Transverse colon (tissue), 4 donors: ENCODE measurements at regions of chr19 and their contacts with region 1.

Region 1: GRCh38 chr19:11203194-11204075 is 6.1 kb upstream of the KANK2 start:
- DNase-seq: peak; percentile 67
- H3K4me3 ChIP-seq: no peak overlapping the region
- H3K27ac ChIP-seq: peak overlapping the region; percentile 77 to 91 (median 84)
- H3K4me1 ChIP-seq: peaks cover 0 to 29% (median 12%) of the 10 kb centered on the region in 4 donors
- H3K27me3 ChIP-seq: no peaks in the 10 kb centered on the region
- CTCF ChIP-seq: peak; percentile 78 to 87 (median 81)
- EP300 ChIP-seq: peak; percentile 66
- POLR2A ChIP-seq: no peak

Region 2: GRCh38 chr19:10891405-10892086 is 311.9 kb before region 1 on chr19:
- in situ Hi-C with region 1: no loop called
- intact Hi-C with region 1: no loop called
- DNase-seq: peak; percentile 84
- H3K4me3 ChIP-seq: no peak overlapping the region
- H3K27ac ChIP-seq: peak overlapping the region; percentile 80 to 88 (median 83)
- H3K4me1 ChIP-seq: peaks cover 33 to 53% (median 46%) of the 10 kb centered on the region in 4 donors
- H3K27me3 ChIP-seq: no peaks in the 10 kb centered on the region
- CTCF ChIP-seq: no peak
- EP300 ChIP-seq: no peak
- POLR2A ChIP-seq: peak; percentile 79

Region 3: GRCh38 chr19:11041966-11042627 is 161.3 kb before region 1 on chr19:
- in situ Hi-C with region 1: loop called in 3 of 4 experiments (anchors 10 to 25 kb)
- intact Hi-C with region 1: no loop called
- DNase-seq: no peak
- H3K4me3 ChIP-seq: no peak overlapping the region
- H3K27ac ChIP-seq: no peak overlapping the region
- H3K4me1 ChIP-seq: no peaks in the 10 kb centered on the region
- H3K27me3 ChIP-seq: no peaks in the 10 kb centered on the region
- CTCF ChIP-seq: no peak
- EP300 ChIP-seq: no peak
- POLR2A ChIP-seq: no peak

Region 4: DNA sequence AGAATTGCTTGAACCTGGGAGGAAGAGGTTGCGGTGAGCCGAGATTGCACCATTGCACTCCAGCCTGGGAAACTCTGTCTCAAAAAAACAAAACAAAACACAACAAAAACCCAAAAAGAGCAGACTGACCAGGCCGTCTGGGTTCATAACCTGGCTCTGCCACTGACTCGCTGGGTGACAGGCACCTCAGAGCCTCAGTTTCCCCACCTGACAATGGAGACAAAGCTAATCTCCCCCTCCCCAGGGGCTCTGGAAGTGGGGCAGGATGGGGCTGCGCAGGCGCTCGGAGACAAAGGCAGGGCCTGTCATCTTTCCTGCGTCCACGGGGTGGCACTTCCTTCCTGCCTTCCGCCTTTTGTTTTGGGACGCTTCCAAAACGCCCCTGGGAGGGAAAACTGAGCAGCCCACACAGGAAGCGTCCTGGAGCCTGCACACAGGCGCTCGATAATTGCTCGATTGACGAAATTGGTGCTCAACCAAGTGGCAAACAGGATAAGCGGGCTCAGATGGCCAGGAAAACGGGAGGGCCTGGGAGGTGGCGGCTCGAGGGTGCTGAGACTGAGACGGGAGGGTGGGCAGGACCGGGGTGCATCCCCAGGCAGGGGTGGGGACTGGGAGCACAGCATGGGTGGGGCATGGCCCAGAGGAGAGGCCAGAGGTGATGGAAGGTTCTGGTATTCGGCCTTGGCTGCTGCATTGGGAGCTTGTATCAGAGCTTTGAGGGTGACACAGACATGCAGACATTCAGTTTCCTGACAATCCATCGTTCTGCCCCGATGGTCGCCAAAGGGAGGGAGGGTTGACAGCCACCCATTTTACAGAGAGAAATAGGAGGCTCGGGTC is 65.7 kb before region 1 on chr19:
- in situ Hi-C with region 1: loop called in 3 of 4 experiments (anchors 5 to 10 kb)
- intact Hi-C with region 1: loop called (anchors 2 kb)
- DNase-seq: peak; percentile 78
- H3K4me3 ChIP-seq: peak overlapping the region; percentile 3 to 38 (median 18)
- H3K27ac ChIP-seq: peak overlapping the region; percentile 84 to 96 (median 90)
- H3K4me1 ChIP-seq: peaks cover 33 to 48% (median 43%) of the 10 kb centered on the region in 4 donors
- H3K27me3 ChIP-seq: no peaks in the 10 kb centered on the region
- CTCF ChIP-seq: peak; percentile 79 to 95 (median 81)
- EP300 ChIP-seq: no peak
- POLR2A ChIP-seq: no peak

Region 5: DNA sequence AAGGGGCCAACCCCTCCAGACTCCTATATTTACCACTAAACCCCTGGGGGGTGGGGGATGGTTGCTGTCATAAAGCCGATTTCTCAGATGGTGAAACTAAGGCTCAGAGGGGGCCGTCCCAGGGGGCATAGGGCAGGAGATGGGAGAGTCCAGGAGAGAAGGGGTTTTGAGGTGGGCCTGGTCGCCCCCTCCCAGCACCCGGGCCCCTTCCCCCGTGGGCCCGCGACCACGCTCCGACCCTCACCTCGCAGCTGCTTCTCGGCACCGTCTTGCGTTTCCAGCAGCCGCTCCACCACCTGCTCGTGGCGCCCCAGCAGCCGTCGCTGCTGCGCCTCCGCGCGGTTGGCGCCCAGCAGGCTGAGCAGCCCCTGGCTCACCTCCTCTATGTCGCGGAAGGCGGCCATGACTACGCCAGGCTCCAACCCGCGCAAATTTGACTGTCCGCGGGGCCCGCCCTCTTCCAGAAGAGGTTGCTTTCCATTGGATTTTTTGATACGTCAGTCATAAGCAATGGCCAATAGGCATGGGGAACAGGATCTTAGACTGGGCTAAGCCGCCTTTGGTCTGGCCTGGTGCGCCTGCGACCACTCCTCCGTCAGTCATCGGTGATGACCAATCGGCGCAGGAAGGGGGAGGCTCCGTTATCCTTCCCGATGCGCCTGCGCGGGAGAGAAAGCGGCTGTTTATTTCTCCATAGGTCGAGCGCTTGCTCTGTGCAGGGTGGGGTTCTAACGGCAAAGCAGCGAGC is 47.9 kb before region 1 on chr19 and contains the start of gene SPC24:
- in situ Hi-C with region 1: no loop called
- intact Hi-C with region 1: no loop called
- DNase-seq: peak; percentile 95
- H3K4me3 ChIP-seq: peak within 1 kb of the TSS; percentile 49 to 67 (median 58)
- H3K27ac ChIP-seq: peak within 1 kb of the TSS; percentile 63 to 89 (median 80)
- H3K4me1 ChIP-seq: peaks cover 16 to 58% (median 29%) of the 10 kb centered on the region in 4 donors
- H3K27me3 ChIP-seq: no peaks in the 10 kb centered on the region
- CTCF ChIP-seq: no peak
- EP300 ChIP-seq: no peak
- POLR2A ChIP-seq: no peak
- total RNA-seq, gene SPC24: 2.6 to 47.4 TPM in 2 of 4 donors, not detected in the others

Region 6: DNA sequence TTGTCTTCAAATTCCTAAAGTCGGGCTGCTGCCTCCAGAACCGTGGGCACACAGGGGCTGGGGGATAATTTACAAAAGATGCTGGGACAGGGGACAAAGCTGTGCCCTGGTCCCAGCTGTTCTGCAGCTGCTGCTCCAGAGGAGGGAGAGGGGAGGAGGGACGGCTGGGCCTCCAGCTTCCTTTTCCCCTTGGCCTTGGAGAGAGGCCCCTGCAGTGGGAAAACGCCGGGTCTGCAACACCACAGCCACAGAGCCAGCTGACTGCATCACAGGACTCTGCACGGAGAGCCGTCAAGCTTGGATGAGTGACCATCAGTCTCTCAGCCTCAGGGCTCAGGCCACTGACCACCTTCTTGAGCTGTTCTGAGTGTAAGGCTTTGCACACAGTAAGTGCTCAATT is 52.8 kb after region 1 on chr19:
- in situ Hi-C with region 1: no loop called
- intact Hi-C with region 1: no loop called
- DNase-seq: no peak
- H3K4me3 ChIP-seq: no peak overlapping the region
- H3K27ac ChIP-seq: peak overlapping the region in 3 of 4 donors; percentile 28 to 48 (median 46)
- H3K4me1 ChIP-seq: peaks cover 0 to under 1% (median 0%) of the 10 kb centered on the region in 4 donors
- H3K27me3 ChIP-seq: no peaks in the 10 kb centered on the region
- CTCF ChIP-seq: no peak
- EP300 ChIP-seq: no peak
- POLR2A ChIP-seq: no peak